GM10248 (cell line): ENCODE measurements at regions of chr13 and their contacts with region 1.

Region 1: GRCh38 chr13:46181840-46182490 is at the start of gene LCP1:
- DNase-seq: peak; percentile 75
- CTCF ChIP-seq: no peak

Region 2: GRCh38 chr13:46168341-46168740 is 13.6 kb before region 1 on chr13:
- CTCF ChIA-PET with region 1: interaction called, 39 read pairs
- POLR2A ChIA-PET with region 1: interaction called, 6 read pairs
- DNase-seq: no peak
- CTCF ChIP-seq: no peak

Region 3: DNA sequence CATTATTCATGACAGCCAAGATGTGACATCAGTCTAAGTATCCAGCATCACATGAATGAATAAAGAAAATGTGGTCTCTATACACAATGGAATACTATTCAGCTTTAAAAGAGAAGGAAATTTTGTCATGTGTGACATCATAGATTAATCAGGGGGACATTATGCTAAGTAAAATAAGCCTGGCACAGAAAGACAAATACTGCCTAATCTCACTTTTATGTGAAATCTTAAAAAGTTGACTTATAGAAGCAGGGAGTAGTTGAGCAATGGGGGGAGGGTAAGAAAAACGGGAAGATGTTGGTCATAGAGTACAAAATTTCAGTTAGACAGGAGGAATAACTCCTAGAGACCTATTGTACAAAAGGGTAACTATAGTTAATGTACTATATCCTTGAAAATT is 10.4 kb after region 1 on chr13:
- CTCF ChIA-PET with region 1: interaction called, 14 read pairs
- POLR2A ChIA-PET with region 1: no interaction called
- DNase-seq: no peak
- CTCF ChIP-seq: no peak

Region 4: DNA sequence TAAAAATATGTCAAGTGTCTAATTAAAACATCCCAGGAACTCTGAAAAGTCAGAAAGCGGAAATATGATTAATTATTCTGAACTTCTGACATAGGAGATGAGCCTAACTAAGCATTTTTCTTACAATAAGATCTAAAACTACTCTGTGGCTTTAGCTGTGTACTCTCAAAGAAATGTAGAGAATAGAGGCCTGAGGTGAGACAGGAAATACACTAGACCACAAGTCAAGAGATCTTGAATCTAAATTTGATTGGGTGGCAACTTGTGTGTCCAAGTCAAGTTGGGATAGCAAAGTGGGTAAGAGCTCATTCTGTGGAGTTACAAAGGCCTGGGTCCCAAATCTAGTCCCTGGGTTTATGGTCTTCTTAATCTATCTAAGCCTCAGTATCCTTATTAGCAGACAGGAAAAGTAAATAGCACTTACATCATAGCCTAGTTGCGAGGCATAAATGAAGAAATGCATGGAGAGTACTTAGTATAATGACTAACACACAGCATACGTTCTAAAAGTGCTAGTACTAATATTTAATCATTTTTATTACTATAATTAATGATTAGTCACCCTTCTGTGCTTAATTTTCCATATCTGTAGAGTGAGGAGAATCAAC is 20.3 kb after region 1 on chr13:
- CTCF ChIA-PET with region 1: interaction called, 17 read pairs
- POLR2A ChIA-PET with region 1: no interaction called
- DNase-seq: no peak
- CTCF ChIP-seq: no peak